H1 (cell line): ENCODE measurements at regions of chr16 and their contacts with region 1.

Region 1: GRCh38 chr16:75279305-75279704 is 27.9 kb upstream of the BCAR1 start:
- DNase-seq: no peak
- H3K4me3 ChIP-seq: no peak overlapping the region
- H3K27ac ChIP-seq: no peak overlapping the region
- H3K4me1 ChIP-seq: no peaks in the 10 kb centered on the region
- H3K27me3 ChIP-seq: no peaks in the 10 kb centered on the region
- CTCF ChIP-seq: no peak
- EP300 ChIP-seq: no peak
- POLR2A ChIP-seq: no peak
- RAD21 ChIP-seq: no peak

Region 2: DNA sequence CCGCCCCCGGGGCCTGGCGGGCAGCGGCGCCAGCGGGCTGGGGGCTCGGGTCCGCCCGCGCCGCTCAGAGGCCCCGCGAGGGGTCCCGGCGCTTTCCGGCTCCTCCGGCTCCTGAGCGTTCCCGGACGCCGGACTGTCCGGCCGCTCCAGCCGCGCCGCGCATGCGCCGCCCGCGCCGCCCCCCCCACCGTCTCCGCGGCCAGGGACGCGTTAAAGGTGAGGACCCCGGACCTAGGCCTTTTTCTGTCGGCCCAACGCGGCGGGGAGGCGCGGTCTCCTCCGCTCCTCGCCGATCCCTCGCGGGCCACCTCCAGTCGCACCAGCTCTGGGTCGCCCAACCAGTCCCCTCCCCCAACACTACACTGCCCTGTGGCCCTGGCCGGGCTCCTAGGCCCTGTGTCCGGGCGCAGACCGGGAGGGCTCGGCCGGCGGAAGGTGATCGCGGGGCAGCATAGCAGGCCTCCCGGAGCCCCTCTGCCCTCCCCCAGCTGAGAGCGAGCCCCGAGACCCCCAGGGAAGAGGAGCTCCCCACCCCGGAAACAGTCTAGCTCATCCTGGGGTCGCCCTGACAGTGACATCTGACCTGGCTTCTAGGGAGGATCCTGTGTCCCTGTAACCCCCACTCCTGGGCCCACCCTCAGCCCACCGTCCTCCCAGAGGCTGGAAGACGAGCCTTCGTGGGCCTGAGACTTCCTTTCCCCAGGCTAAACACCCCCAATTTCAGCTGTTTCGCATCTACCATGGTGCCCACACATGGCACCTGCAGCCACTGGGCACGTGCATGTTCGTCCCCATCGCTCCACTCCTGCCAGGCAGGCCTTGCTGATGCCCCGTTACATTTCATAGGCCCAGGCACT is 13.2 kb before region 1 on chr16:
- CTCF ChIA-PET with region 1: interaction called, 12 read pairs
- POLR2A ChIA-PET with region 1: interaction called, 6 read pairs
- DNase-seq: peak in 1 of 2 experiments; percentile 93
- H3K4me3 ChIP-seq: peak overlapping the region; percentile 76 to 99 (median 83)
- H3K27ac ChIP-seq: no peak overlapping the region; the same call in 1 of the 2 replicates
- H3K4me1 ChIP-seq: peaks cover 0 to 31% (median 23%) of the 10 kb centered on the region in 4 experiments; a peak in 6 of 7 replicates
- H3K27me3 ChIP-seq: no peaks in the 10 kb centered on the region
- CTCF ChIP-seq: no peak
- EP300 ChIP-seq: no peak
- POLR2A ChIP-seq: peak in 1 of 2 experiments; percentile 65; a peak in 2 of 3 replicates
- RAD21 ChIP-seq: peak; percentile 40 to 44